PC-3 (cell line): ENCODE measurements at regions of chr18 and their contacts with region 1.

Region 1: GRCh38 chr18:54224379-54225014 is at the start of gene MBD2:
- DNase-seq: peak; percentile 96
- ATAC-seq: peak; percentile 95
- H3K4me3 ChIP-seq: peak within 1 kb of the TSS; percentile 71
- H3K27ac ChIP-seq: peak within 1 kb of the TSS; percentile 45
- H3K4me1 ChIP-seq: peaks cover 23% of the 10 kb centered on the region
- H3K27me3 ChIP-seq: no peaks in the 10 kb centered on the region
- CTCF ChIP-seq: peak; percentile 39; the same call in 1 of the 2 replicates
- total RNA-seq, gene MBD2: 31.9 and 37.0 TPM in 2 replicates

Region 2: DNA sequence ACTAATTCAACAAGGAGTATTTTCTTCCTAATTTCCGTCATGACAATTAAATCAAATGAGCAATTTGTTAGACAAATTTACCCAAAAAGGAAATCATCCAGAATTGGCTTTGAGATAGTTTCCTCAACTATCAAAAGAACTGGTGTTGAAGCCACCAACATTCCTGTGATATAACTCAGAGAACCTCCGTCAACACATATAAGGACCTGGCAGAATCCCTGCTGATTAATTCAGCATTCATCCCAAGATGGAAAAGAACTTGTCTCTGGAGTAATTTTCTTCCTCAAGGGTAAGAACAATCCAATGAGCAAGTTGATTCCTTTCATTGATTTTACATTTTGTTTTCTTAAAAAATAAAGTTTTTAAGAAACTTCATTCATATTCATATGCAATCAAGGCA is 62.1 kb before region 1 on chr18:
- CTCF ChIA-PET with region 1: no interaction called
- POLR2A ChIA-PET with region 1: no interaction called
- intact Hi-C with region 1: loop called (anchors 5 kb)
- DNase-seq: peak; percentile 83
- ATAC-seq: peak; percentile 76
- H3K4me3 ChIP-seq: no peak overlapping the region
- H3K27ac ChIP-seq: peak overlapping the region; percentile 38
- H3K4me1 ChIP-seq: peaks cover 31% of the 10 kb centered on the region
- H3K27me3 ChIP-seq: no peaks in the 10 kb centered on the region
- CTCF ChIP-seq: no peak

Region 3: DNA sequence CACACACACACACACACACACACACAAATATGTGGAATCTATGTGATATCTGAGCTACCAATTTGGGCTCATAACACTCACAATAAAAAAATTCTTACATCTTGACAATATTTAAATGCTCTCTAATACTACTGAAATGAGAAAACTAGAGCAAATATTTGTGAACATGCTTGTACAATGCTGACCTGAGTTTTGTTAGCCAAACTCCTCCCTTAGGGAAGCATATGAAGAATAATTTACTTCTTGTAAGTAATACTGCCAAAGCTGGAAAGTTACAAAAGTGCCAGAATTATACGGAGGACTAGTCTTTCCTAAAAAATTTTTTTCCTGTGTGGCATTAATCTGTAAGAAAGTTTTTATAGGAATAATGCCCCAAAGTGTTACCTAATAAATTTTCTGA is 18.5 kb before region 1 on chr18:
- CTCF ChIA-PET with region 1: no interaction called
- POLR2A ChIA-PET with region 1: no interaction called
- intact Hi-C with region 1: loop called (anchors 2 kb)
- DNase-seq: no peak
- ATAC-seq: peak; percentile 66; the same call in 1 of the 2 replicates
- H3K4me3 ChIP-seq: no peak overlapping the region
- H3K27ac ChIP-seq: no peak overlapping the region
- H3K4me1 ChIP-seq: peaks cover 5% of the 10 kb centered on the region
- H3K27me3 ChIP-seq: no peaks in the 10 kb centered on the region
- CTCF ChIP-seq: no peak

Region 4: GRCh38 chr18:54263904-54264371 is 39.4 kb after region 1 on chr18:
- CTCF ChIA-PET with region 1: no interaction called
- POLR2A ChIA-PET with region 1: interaction called, 15 read pairs
- intact Hi-C with region 1: no loop called
- DNase-seq: no peak
- ATAC-seq: no peak
- H3K4me3 ChIP-seq: no peak overlapping the region
- H3K27ac ChIP-seq: no peak overlapping the region
- H3K4me1 ChIP-seq: peaks cover 10% of the 10 kb centered on the region
- H3K27me3 ChIP-seq: no peaks in the 10 kb centered on the region
- CTCF ChIP-seq: no peak

Region 5: DNA sequence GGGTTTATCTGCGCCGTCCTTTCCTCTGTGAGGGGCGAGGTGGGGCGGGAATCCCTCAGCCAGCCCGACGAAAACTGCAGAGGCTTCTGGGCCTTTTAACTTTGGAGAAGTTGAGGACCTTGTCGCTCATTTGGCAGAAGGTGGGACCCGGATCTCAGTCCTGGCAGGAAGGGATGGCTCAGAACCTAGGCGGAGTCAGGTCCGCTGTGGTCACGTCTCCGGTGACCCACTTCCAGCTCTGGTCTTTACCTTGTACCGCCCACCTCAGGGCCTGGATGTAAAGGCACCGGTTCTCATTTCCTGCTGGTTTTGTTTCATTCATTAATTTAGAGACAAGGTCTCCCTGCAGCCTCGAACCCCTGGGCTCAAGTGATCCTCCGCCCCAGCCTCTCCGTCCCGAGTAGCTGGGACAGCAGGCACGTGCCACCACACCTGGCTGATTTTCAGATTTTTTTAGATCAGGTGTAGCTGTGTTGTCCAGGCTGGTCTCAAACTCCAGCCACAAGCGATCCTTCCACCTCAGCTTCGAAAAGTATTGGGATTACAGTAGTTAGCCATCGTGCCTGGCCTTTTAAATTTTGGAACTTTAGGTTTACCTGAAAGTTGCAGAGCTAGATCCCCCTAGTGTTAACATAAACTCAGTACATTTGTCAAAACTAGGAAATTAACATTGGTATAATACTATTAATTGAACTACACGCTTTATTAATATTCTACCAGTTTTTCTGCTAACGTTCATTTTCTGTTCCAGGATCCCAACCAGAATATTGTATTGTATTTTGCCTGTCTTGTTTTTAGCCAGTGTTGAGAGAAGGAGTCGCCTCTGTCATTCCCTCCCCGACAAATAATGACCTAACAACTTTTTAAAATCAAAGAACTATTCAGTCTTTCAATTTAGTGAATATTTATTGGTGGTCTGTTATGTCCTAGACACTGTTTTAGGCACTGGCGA is 45.7 kb after region 1 on chr18:
- CTCF ChIA-PET with region 1: interaction called, 15 read pairs
- POLR2A ChIA-PET with region 1: interaction called, 4 read pairs
- intact Hi-C with region 1: loop called (anchors 1 kb)
- DNase-seq: peak; percentile 67
- ATAC-seq: peak; percentile 80
- H3K4me3 ChIP-seq: peak overlapping the region; percentile 68
- H3K27ac ChIP-seq: peak overlapping the region; percentile 83
- H3K4me1 ChIP-seq: peaks cover 12% of the 10 kb centered on the region; the same call in 1 of the 2 replicates
- H3K27me3 ChIP-seq: no peaks in the 10 kb centered on the region
- CTCF ChIP-seq: peak; percentile 67

Region 6: DNA sequence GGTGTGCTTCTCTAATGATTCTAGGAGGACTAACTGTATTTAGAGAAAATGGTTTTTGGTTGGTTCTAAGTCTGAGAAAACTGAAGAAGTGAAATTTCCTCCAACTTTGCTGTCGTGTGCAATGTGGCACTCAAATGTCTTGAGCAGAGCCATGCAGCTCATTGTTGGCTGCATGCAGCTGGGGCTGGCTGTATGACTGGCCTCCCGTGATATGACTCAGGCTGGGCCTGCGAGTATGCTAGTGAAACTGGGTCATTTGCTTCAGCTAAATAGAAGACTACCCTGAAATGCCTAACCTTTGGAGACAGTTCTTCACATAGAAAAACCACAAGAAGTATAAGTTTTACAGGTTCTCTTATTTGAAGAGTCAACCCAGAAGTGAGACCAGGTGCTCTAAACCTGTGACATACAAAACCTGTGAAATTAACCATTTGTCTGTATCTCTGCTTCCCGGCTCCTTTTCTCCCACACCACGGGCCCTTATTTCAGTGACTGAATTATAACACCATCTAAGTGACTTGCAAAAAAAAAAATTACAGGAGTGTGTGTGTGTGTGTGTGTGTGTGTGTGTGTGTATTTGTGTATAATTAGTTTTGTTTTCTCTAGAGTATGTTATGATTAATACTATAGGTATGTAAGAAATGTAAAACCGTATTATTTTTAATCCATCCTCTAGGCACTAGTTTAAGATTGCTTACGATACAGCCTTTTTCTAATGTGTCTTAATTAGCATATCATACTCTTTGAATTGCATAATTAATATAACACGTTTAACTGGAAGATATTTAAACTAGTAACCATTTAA is 60.7 kb after region 1 on chr18:
- CTCF ChIA-PET with region 1: no interaction called
- POLR2A ChIA-PET with region 1: interaction called, 13 read pairs
- intact Hi-C with region 1: no loop called
- DNase-seq: peak; percentile 74
- ATAC-seq: peak; percentile 100
- H3K4me3 ChIP-seq: no peak overlapping the region
- H3K27ac ChIP-seq: no peak overlapping the region; the same call in 1 of the 2 replicates
- H3K4me1 ChIP-seq: peaks cover 12% of the 10 kb centered on the region
- H3K27me3 ChIP-seq: no peaks in the 10 kb centered on the region
- CTCF ChIP-seq: no peak

Region 7: GRCh38 chr18:54357660-54358494 is 133.4 kb after region 1 on chr18 and contains the starts of genes C18orf54 and STARD6:
- CTCF ChIA-PET with region 1: no interaction called
- POLR2A ChIA-PET with region 1: interaction called, 3 read pairs
- intact Hi-C with region 1: loop called (anchors 10 kb)
- DNase-seq: peak; percentile 90
- ATAC-seq: peak; percentile 90
- H3K4me3 ChIP-seq: peak within 1 kb of the TSS; percentile 96
- H3K27ac ChIP-seq: peak within 1 kb of the TSS; percentile 49
- H3K4me1 ChIP-seq: peaks cover 18% of the 10 kb centered on the region
- H3K27me3 ChIP-seq: no peaks in the 10 kb centered on the region
- CTCF ChIP-seq: peak; percentile 61
- total RNA-seq, gene C18orf54: 5.1 and 10.5 TPM in 2 replicates
- total RNA-seq, gene STARD6: not detected in 2 replicates